Activated CD4-positive, alpha-beta T cell treated with anti-CD3 and anti-CD28 coated beads for 36 hours (primary cell): ENCODE measurements at regions of chr7 and their contacts with region 1.

Region 1: DNA sequence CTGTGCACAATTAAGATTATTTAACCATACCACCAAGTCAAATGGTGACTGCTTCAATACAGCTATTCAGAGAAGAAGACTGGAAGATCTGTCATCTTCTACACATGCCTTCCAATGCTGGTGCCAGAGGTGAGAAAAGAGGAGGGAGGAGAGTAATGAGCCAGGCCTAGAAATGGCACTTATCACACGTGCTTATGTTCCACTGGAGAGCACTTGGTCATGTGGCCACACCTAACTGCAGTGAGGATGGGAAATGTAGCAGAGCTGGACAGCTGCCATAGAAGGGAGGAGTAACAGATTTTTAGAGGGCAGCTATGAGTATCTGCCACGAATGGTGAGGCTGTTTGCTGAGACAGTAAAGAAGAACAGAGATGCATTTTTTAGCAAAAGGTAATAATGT is 77.1 kb downstream of the MPLKIP start:
- DNase-seq: no peak
- ATAC-seq: no peak
- H3K4me3 Mint-ChIP-seq: no peak overlapping the region
- H3K27ac Mint-ChIP-seq: no peak overlapping the region
- H3K4me1 Mint-ChIP-seq: peaks cover 3% of the 10 kb centered on the region
- H3K27me3 Mint-ChIP-seq: no peaks in the 10 kb centered on the region

Region 2: DNA sequence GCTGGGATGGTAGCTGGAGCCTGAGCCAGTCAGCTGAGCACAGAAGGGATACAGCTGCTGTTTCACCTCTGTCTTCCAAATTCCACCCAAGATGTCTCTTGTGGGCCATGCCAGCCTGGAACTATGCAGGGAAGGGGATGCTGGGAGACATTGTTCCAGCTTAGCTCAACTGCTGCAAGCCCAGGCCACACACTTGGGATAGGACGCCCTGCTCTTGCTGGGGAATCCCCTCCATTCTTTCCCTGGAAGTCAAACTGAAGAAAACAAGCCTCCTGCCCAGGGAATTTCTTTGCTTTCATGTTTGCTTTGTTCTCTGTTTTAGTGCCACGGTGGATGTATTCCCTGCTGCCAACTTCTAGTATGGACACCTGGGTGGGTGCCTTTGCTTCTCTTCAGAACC is 162.4 kb before region 1 on chr7:
- CTCF ChIA-PET with region 1: interaction called, 133 read pairs
- POLR2A ChIA-PET with region 1: interaction called, 4 read pairs
- intact Hi-C with region 1: loop called (anchors 1 kb)
- DNase-seq: no peak
- ATAC-seq: no peak
- H3K4me3 Mint-ChIP-seq: no peak overlapping the region
- H3K27ac Mint-ChIP-seq: no peak overlapping the region
- H3K4me1 Mint-ChIP-seq: no peaks in the 10 kb centered on the region
- H3K27me3 Mint-ChIP-seq: peaks cover under 1% of the 10 kb centered on the region

Region 3: DNA sequence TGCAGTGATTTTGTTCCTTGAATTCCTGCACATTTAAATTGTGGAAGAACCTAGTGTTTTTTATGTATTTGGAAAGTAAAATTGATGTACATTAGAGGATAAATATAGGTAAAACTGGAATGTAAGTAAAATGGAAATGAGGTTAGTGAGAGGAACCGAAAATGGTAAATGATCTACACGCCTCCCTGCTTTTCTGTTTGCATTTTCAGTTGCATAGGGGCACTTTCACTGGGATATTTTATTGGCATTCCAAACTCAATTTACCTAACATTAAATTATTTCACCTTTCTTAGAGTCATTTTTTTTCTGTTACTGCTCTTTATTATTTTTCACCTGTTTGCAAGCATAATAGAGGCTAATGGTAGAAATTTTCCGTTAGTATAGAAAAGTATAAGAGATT is 99.3 kb before region 1 on chr7:
- CTCF ChIA-PET with region 1: interaction called, 22 read pairs
- POLR2A ChIA-PET with region 1: no interaction called
- intact Hi-C with region 1: no loop called
- DNase-seq: no peak
- ATAC-seq: no peak
- H3K4me3 Mint-ChIP-seq: no peak overlapping the region
- H3K27ac Mint-ChIP-seq: no peak overlapping the region
- H3K4me1 Mint-ChIP-seq: peaks cover 70% of the 10 kb centered on the region
- H3K27me3 Mint-ChIP-seq: no peaks in the 10 kb centered on the region

Region 4: DNA sequence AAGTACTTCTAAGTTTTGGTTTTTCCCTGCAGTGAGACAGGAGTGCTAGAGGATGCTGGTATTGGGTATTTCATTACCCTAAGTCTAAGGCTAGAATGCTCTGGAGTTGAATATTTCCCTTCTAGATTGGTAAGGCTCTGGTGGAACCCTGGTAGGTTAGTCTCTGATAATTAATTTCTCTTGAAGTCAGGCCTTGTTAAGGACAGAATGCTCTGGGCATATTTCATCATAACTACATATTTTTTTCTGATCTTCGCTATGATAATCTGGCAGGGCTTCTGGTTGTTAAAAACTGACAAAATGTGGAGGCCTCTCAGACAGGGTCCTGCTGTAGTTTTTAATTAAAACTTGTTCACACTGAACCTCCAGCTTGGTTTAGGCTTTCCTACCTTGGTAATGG is 23.5 kb before region 1 on chr7:
- CTCF ChIA-PET with region 1: interaction called, 16 read pairs
- POLR2A ChIA-PET with region 1: no interaction called
- intact Hi-C with region 1: no loop called
- DNase-seq: no peak
- ATAC-seq: no peak
- H3K4me3 Mint-ChIP-seq: no peak overlapping the region
- H3K27ac Mint-ChIP-seq: no peak overlapping the region
- H3K4me1 Mint-ChIP-seq: peaks cover 24% of the 10 kb centered on the region
- H3K27me3 Mint-ChIP-seq: no peaks in the 10 kb centered on the region

Region 5: DNA sequence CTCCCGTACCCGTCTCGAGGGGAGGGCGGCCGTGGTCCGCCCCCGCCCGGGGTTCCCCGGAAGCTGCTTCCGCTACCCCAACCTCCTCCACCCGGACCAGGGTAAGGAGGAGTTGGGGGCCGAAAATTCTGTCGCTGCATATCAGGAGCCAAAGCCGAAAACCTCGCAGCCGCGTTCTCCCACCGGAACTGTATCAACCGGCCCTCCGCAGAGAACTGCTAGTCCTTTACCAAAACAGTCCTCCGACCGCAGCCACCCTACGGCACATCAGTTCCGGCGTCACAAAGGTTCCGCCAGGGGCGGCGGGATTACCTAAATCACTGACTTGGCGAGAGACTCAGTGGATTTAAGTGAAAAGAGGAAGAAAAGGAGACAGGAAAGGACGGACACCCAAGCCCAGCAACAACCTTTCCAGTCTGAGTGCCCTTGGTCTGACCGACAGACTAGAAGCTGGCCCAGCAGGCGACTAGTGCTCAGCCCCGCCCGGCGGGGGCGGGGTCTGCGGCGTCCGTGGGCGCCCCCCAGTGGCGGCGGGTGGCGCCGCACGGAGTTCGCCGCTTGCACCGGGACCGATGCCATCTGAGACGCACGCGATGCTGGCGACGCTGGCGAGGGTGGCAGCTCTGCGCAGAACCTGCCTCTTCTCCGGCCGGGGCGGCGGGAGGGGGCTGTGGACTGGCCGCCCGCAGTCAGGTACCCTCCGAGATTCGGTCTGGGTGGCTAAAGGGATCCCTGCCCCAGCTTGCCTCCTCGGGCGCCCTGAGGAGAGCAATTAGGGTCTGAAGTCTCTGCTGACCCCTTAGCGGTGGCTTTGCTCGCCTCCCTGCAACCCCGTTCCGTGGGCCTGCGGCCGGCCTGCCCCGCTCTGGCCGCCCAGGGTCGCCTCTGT is 77.4 kb after region 1 on chr7 and contains the starts of genes MPLKIP and SUGCT:
- CTCF ChIA-PET with region 1: no interaction called
- POLR2A ChIA-PET with region 1: no interaction called
- intact Hi-C with region 1: loop called in 1 of 2 experiments (anchors 2 kb)
- DNase-seq: peak; percentile 90
- ATAC-seq: peak; percentile 86
- H3K4me3 Mint-ChIP-seq: peak within 1 kb of the TSS; percentile 80
- H3K27ac Mint-ChIP-seq: peak within 1 kb of the TSS; percentile 92
- H3K4me1 Mint-ChIP-seq: peaks cover 28% of the 10 kb centered on the region
- H3K27me3 Mint-ChIP-seq: peaks cover 3% of the 10 kb centered on the region
- total RNA-seq, gene MPLKIP: 28.5 to 35.2 TPM
- total RNA-seq, gene SUGCT: 1.2 to 1.9 TPM